ENCODE measurements at regions of chr17 and their contacts with region 1.

Region 1: GRCh38 chr17:44006598-44007345 is 2.4 kb downstream of the NAGS start:
- DNase-seq: peak; percentile 86
- H3K4me3 Mint-ChIP-seq: peak overlapping the region; percentile 81
- H3K27ac Mint-ChIP-seq: peak overlapping the region; percentile 70
- H3K4me1 Mint-ChIP-seq: peaks cover 23% of the 10 kb centered on the region
- H3K27me3 Mint-ChIP-seq: peaks cover 20% of the 10 kb centered on the region

Region 2: GRCh38 chr17:42019509-42020404 is 1987.0 kb before region 1 on chr17 and contains the start of gene NKIRAS2:
- intact Hi-C with region 1: loop called (anchors 5 kb)
- DNase-seq: peak; percentile 93
- H3K4me3 Mint-ChIP-seq: peak within 1 kb of the TSS; percentile 100
- H3K27ac Mint-ChIP-seq: peak within 1 kb of the TSS; percentile 81
- H3K4me1 Mint-ChIP-seq: peaks cover 53% of the 10 kb centered on the region
- H3K27me3 Mint-ChIP-seq: no peaks in the 10 kb centered on the region
- total RNA-seq, gene NKIRAS2: 32.6 and 36.3 TPM in 2 replicates

Region 3: DNA sequence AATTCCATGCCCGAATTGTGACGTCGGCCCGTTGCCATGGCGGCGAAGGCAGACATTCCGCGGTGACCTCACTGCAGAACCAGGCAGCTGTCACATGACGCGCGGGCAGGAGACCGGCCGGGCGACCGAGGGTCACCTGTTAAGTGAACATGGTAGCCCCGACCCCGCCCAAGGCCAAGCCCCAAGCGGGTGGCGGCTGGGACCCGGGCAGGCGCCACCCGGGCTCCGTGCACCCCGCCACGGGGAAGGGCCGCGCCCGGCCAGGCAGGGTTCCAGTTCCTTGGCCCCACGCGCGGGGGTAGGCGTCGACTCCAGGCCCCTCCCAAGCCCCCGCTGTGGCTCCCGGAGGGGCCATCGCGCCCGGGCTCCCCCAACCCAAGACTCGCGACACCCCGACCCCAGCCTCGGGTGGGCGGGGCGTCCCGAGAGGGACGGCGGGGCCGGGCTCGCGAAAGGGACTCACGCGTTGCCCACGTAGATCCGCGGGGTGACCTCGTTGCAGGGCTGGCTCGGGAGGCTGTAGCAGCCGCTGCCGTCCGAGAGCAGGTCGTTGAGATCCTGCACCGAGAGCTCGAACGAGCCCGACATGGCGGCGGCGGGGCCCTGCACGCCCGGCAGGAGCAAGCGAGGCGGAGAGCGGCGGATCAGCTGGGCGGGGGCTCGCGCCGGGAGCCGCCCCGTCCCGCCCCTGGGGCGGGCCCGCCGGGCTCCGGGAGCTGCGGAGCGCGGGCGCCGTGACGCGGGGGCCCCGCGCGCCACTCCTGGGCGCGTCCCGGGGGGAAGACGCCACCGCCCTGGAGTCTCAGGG is 228.2 kb before region 1 on chr17 and contains the start of gene DUSP3:
- intact Hi-C with region 1: loop called (anchors 1 kb)
- DNase-seq: peak; percentile 73
- H3K4me3 Mint-ChIP-seq: peak within 1 kb of the TSS; percentile 87
- H3K27ac Mint-ChIP-seq: peak within 1 kb of the TSS; percentile 76
- H3K4me1 Mint-ChIP-seq: peaks cover 7% of the 10 kb centered on the region
- H3K27me3 Mint-ChIP-seq: peaks cover 32% of the 10 kb centered on the region
- total RNA-seq, gene DUSP3: 11.7 and 12.0 TPM in 2 replicates

Region 4: DNA sequence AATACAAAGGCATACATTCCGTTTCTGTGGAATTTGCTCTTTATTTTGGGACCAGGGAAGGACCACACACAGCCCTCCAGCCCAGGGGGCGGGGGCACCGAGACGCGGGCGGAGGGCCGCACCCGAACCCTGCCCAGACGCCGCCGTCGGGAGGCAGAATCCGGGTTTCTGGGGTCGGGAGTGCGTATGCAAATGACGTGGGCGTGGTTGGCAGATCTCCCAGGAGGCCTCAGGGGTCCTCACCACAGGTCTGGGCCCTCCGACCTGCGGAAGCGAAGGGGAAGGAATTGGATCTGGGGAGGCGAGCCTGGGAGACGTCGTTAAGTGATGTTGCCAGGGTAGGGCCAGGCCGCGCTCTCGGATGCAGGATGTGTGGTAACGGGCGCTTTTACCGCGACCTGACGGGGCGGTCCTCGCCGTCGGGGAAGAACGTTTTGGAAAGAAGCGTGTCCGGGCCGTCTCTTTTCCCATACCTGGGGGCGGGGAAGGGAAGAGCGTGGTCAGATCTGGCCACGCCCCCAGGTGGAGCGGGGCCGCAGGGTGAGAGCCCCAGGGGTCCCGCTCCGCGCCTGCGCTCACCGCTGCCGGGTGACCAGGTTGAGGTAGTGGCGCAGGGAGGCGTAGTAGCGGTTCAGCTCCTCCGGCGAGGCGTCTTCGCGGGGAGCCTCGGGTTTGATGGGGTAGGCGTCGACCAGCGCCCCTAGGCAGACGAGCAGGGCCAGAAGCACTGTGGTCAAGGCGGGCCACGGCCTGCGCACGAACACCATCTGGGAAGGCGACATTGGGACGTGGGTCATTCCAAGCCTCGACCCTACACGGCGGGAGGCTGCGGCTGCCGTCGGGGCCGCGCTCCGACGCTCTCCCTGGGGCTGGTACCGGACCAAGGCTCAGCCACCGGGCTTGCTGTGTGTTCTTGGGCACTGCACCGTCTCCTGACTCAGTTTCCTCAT is 53.8 kb before region 1 on chr17:
- intact Hi-C with region 1: no loop called
- DNase-seq: no peak
- H3K4me3 Mint-ChIP-seq: no peak overlapping the region
- H3K27ac Mint-ChIP-seq: no peak overlapping the region
- H3K4me1 Mint-ChIP-seq: no peaks in the 10 kb centered on the region
- H3K27me3 Mint-ChIP-seq: peaks cover 32% of the 10 kb centered on the region

Region 5: DNA sequence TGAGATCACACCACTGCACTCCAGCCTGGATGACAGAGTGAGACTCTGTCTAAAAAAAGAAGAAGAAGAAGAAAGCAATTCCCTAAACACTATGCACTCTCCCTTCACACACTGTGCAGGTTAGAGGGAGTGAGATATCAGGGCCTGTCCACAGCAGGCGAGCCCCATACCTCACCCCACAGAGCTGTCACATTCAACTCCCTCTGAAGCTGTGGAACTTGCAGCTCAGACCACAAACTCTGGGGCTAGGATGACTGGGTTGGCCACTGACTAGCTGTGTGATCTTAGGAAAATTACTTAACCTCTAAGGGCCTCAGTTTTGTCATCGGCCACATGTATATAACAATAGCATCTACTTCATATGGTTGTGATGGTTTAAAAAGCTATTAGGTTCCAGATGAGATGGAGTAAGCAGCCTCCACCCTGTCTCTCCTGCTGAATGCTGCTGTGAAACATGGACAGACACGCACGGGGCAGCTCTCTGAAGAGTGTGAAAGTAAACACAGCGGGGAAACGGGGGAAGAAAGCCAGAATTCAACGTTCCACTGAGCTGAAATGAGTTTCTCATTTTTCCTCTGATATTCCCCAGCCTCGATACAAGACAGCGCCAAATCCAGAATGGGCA is 39.4 kb before region 1 on chr17:
- intact Hi-C with region 1: no loop called
- DNase-seq: no peak
- H3K4me3 Mint-ChIP-seq: no peak overlapping the region
- H3K27ac Mint-ChIP-seq: no peak overlapping the region
- H3K4me1 Mint-ChIP-seq: no peaks in the 10 kb centered on the region
- H3K27me3 Mint-ChIP-seq: peaks cover 13% of the 10 kb centered on the region

Region 6: DNA sequence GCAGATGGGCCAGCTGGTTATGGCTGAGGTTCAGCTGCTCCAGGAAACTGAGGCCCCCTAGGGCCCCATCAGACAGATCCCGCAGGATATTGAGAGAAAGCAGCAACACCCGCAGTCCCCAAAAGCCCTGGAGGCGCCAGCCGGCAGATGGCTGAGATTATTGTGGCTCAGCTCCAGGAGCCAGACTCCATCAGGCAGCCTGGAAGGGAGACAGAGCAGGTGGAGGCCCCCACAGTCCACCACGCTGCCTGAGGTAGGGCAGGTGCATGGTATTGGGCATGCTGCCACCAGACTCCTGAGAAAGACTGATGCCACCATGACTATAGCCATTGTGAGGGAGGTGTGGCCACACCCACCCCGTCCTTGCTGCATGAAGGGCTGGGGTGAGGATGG is 17.5 kb after region 1 on chr17:
- intact Hi-C with region 1: no loop called
- DNase-seq: no peak
- H3K4me3 Mint-ChIP-seq: no peak overlapping the region
- H3K27ac Mint-ChIP-seq: no peak overlapping the region
- H3K4me1 Mint-ChIP-seq: peaks cover 5% of the 10 kb centered on the region
- H3K27me3 Mint-ChIP-seq: no peaks in the 10 kb centered on the region

Region 7: GRCh38 chr17:44070455-44071197 is 63.9 kb after region 1 on chr17 and contains the start of gene G6PC3:
- intact Hi-C with region 1: loop called (anchors 2 kb)
- DNase-seq: peak; percentile 78
- H3K4me3 Mint-ChIP-seq: peak within 1 kb of the TSS; percentile 98
- H3K27ac Mint-ChIP-seq: peak within 1 kb of the TSS; percentile 99
- H3K4me1 Mint-ChIP-seq: peaks cover 16% of the 10 kb centered on the region
- H3K27me3 Mint-ChIP-seq: no peaks in the 10 kb centered on the region
- total RNA-seq, gene G6PC3: 33.5 and 34.9 TPM in 2 replicates

Region 8: GRCh38 chr17:44141717-44142285 is 135.0 kb after region 1 on chr17 and contains the start of gene HROB:
- intact Hi-C with region 1: loop called (anchors 5 kb)
- DNase-seq: peak; percentile 97
- H3K4me3 Mint-ChIP-seq: peak within 1 kb of the TSS; percentile 95
- H3K27ac Mint-ChIP-seq: peak within 1 kb of the TSS; percentile 95
- H3K4me1 Mint-ChIP-seq: peaks cover 16% of the 10 kb centered on the region
- H3K27me3 Mint-ChIP-seq: no peaks in the 10 kb centered on the region
- total RNA-seq, gene HROB: 23.0 and 23.1 TPM in 2 replicates

Region 9: GRCh38 chr17:44199553-44200477 is 193.0 kb after region 1 on chr17 and contains the start of gene ATXN7L3:
- intact Hi-C with region 1: loop called (anchors 1 kb)
- DNase-seq: peak; percentile 97
- H3K4me3 Mint-ChIP-seq: peak within 1 kb of the TSS; percentile 94
- H3K27ac Mint-ChIP-seq: peak within 1 kb of the TSS; percentile 90
- H3K4me1 Mint-ChIP-seq: peaks cover 48% of the 10 kb centered on the region
- H3K27me3 Mint-ChIP-seq: no peaks in the 10 kb centered on the region
- total RNA-seq, gene ATXN7L3: 125 and 126 TPM in 2 replicates

Region 10: DNA sequence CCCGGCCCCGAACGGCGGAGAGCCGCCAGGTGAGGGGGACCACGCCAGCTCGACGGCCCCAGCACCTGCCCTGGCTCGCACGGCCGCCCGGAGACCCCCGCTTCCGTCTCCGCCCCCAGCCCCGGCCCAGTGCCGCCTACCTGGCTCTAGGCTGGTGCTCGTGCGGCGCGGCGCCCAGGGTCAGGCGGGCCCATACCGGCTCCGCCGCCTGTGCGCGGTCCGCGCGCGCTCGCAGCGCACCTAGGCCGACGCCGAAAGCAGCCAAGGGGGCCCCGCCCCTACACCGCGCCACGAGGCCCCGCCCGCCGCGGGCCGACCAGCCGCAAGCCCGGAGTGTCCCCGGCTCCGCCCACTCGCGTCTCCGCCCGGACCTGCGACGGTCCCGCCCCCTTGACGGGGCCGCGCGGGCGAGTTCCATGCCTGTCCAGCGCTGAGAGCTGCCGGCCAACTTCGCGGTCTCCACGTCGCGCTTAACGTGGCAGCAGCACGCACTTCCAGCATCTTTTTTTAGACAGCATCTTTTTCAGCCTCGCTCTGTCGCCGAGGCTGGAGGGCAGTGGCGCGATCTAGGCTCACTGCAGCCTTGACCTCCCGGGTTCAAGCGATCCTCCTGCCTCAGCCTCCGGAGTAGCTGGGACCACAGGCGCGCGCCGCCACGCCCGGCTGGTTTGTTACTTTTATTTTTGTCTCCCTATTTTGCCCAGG is 318.0 kb after region 1 on chr17 and contains the start of gene SLC25A39:
- intact Hi-C with region 1: loop called (anchors 5 kb)
- DNase-seq: peak; percentile 96
- H3K4me3 Mint-ChIP-seq: peak within 1 kb of the TSS; percentile 93
- H3K27ac Mint-ChIP-seq: peak within 1 kb of the TSS; percentile 97
- H3K4me1 Mint-ChIP-seq: peaks cover 10% of the 10 kb centered on the region
- H3K27me3 Mint-ChIP-seq: no peaks in the 10 kb centered on the region
- total RNA-seq, gene SLC25A39: 169 and 180 TPM in 2 replicates

Region 11: DNA sequence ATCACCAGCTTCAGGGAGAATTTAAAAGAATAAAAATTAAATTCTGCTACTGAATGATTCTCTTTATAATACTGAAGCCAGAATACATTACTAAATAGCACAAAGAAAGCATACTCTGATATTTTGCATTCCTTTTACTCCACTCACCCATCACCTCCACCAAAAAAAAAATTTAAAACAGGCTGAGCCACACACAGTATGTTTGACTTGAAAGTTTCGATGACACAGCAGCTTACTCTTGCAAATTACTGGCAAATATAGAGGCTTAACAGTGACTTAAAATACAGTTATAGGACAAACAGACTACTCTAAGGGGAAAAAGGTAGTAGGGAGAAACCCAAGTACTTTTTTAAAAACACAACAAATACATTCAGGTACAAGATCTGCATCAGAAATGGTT is 457.3 kb after region 1 on chr17:
- intact Hi-C with region 1: no loop called
- DNase-seq: no peak
- H3K4me3 Mint-ChIP-seq: no peak overlapping the region
- H3K27ac Mint-ChIP-seq: peak overlapping the region; percentile 55
- H3K4me1 Mint-ChIP-seq: peaks cover 10% of the 10 kb centered on the region
- H3K27me3 Mint-ChIP-seq: no peaks in the 10 kb centered on the region